Right ventricle myocardium inferior (tissue), 1 donor: ENCODE measurements at regions of chr10 and their contacts with region 1.

Region 1: GRCh38 chr10:128011175-128011979 is 104.5 kb downstream of the PTPRE start:
- DNase-seq: peak; percentile 91
- ATAC-seq: peak; percentile 88

Region 2: GRCh38 chr10:127906548-127907377 is 104.6 kb before region 1 on chr10 and contains the start of gene PTPRE:
- intact Hi-C with region 1: loop called (anchors 1 kb)
- DNase-seq: peak; percentile 92
- ATAC-seq: peak; percentile 93
- total RNA-seq, gene PTPRE: 17.4 TPM